Posterior cingulate gyrus (tissue), 11 donors: ENCODE measurements at regions of chr9 and their contacts with region 1.

Region 1: DNA sequence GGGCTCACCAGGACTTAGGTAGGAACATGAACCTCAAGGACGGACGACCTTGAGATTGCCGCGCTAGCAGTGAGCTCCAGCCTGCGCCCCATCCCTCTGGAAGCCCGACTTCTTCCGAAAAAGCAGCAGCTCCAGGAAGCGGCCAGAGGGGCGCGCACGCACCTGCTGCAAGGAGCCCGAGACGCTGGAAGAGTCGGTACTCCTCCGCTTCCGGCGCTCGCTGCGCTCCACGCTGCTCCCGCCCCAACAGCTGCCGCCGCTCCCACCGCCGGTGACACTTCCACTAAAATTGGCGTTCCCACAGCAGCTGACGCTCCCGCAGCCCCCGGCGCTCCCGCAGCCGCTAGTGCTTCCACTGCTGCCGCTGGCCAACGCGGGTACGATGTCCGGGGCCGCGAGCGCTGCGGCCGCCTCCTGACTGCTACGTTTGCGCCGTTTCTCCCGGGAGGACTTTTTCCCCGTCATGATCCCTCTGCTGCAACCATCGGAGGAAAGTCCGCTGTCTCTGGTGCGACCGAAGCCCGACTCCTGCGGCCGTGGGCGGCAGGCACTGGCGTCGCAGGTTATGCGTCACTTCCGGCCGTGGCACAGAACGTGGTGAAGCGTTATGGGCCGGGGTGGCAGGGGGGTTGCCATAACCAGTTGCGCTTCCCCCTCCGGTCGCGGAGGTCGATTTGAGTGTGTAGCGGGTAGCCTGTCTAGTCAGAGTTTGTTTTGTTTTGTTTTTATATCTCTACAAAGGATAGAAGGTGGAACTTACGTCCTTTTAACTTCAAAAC is at the start of gene CAAP1:
- DNase-seq: peak; percentile 89 to 99 (median 93)

Region 2: DNA sequence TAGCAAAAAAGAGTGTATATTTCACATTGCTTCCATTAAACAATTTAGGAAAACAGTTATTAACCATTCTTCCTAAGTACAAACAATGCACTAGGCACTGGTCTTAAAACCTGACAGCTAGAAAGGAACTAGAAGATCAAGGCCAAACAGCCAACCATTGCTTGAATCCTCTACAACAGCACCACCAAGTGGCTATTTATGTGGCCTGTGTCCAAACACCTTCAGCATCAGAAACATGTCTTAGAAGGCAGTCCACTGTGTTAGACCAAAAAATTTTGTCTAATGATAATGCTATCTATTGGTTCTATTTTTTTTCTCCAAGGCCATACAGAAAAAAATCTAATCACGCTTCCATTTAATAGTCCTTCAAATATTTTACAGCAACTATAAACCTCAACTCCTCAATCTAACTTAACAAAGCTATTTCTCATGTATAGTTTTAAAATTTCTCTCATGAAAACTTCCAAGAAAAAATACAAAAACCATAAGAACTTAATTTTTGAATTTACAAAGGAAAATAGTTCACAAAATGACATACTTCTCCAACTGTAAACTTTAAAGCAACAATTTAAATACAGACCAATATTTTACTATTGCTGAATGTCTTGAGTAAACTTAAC is 35.9 kb before region 1 on chr9:
- intact Hi-C with region 1: no loop called
- DNase-seq: no peak

Region 3: GRCh38 chr9:26946753-26947727 is 54.6 kb after region 1 on chr9 and contains the start of gene PLAA:
- intact Hi-C with region 1: loop called (anchors 2 kb)
- DNase-seq: peak; percentile 80 to 98 (median 86)

Region 4: GRCh38 chr9:26955921-26956859 is 63.8 kb after region 1 on chr9 and contains the start of gene IFT74:
- intact Hi-C with region 1: loop called (anchors 2 kb)
- DNase-seq: peak; percentile 92 to 100 (median 98)

Region 5: GRCh38 chr9:27033823-27034403 is 141.5 kb after region 1 on chr9:
- intact Hi-C with region 1: no loop called
- DNase-seq: peak in 5 of 10 donors; percentile 32 to 73 (median 59)

Region 6: GRCh38 chr9:27573634-27574590 is 681.5 kb after region 1 on chr9:
- intact Hi-C with region 1: loop called (anchors 5 kb)
- DNase-seq: peak; percentile 81 to 98 (median 93)